ENCODE measurements at regions of chr22 and their contacts with region 1.

Region 1: DNA sequence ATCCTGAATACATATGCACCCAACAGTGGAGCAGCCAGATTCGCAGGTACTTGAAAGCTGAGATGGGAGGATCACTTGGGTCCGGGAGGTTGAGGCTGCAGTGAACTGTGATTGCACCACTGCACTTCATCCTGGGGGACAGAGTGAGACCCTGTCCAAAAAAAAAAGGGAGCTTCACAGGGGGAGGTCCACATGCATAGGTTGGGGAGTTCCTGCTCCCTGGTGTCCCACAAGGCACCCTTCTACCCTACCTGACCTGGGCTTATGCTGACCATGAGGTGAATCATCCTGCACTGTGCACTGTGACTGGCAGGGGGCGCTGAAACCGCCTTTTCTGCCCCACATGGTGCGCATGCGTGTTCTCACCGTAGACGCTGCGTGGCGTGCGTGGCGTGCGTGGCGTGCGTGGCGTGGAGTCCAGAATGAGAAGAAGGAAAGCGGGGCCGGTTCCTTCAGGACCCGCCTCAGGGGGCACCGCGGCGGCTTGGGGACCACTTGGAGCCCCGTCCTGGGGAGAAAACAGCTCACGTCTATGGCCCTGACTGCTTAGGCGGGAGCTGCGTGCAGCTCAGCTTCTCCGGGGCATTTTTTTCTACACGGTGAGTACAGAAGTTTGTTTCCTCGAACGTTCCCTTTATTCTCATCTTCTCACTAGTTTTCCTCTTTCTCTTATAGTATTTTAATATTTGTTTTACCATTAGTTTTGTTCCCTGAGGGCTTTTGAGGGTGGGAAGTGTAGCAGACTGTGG is 116.6 kb upstream of the GRK3 start:
- DNase-seq: peak; percentile 83
- H3K4me3 Mint-ChIP-seq: peak overlapping the region; percentile 95
- H3K27ac Mint-ChIP-seq: peak overlapping the region; percentile 94
- H3K4me1 Mint-ChIP-seq: peaks cover 38% of the 10 kb centered on the region
- H3K27me3 Mint-ChIP-seq: no peaks in the 10 kb centered on the region

Region 2: DNA sequence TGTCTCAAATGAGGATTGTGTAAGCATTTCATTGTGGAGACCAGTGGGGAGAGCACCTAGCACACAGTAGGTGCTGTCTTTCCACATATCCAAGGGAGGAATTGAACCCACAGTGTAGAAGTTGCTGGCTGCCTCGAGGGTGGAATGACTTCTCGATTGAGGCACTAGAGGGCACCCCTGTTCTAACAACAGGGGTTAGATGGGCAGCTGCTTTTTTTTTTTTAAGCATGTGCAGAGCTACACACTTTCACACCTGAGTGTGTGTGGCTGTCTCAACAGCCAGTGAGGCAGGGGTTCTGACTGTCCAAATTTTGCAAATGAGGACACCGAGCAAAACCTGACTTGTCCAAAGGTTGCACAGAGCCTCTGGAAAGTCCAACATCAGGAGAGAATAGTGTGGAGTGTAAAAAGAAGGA is 366.4 kb before region 1 on chr22:
- intact Hi-C with region 1: loop called (anchors 5 kb)
- DNase-seq: peak; percentile 33
- H3K4me3 Mint-ChIP-seq: no peak overlapping the region
- H3K27ac Mint-ChIP-seq: peak overlapping the region; percentile 72
- H3K4me1 Mint-ChIP-seq: peaks cover 83% of the 10 kb centered on the region
- H3K27me3 Mint-ChIP-seq: no peaks in the 10 kb centered on the region

Region 3: GRCh38 chr22:25362215-25362882 is 85.5 kb before region 1 on chr22:
- intact Hi-C with region 1: loop called (anchors 1 kb)
- DNase-seq: peak; percentile 57
- H3K4me3 Mint-ChIP-seq: no peak overlapping the region
- H3K27ac Mint-ChIP-seq: no peak overlapping the region
- H3K4me1 Mint-ChIP-seq: peaks cover 9% of the 10 kb centered on the region
- H3K27me3 Mint-ChIP-seq: no peaks in the 10 kb centered on the region

Region 4: GRCh38 chr22:25475257-25476022 is 27.6 kb after region 1 on chr22:
- intact Hi-C with region 1: no loop called
- DNase-seq: no peak
- H3K4me3 Mint-ChIP-seq: no peak overlapping the region
- H3K27ac Mint-ChIP-seq: no peak overlapping the region
- H3K4me1 Mint-ChIP-seq: peaks cover 7% of the 10 kb centered on the region
- H3K27me3 Mint-ChIP-seq: no peaks in the 10 kb centered on the region

Region 5: DNA sequence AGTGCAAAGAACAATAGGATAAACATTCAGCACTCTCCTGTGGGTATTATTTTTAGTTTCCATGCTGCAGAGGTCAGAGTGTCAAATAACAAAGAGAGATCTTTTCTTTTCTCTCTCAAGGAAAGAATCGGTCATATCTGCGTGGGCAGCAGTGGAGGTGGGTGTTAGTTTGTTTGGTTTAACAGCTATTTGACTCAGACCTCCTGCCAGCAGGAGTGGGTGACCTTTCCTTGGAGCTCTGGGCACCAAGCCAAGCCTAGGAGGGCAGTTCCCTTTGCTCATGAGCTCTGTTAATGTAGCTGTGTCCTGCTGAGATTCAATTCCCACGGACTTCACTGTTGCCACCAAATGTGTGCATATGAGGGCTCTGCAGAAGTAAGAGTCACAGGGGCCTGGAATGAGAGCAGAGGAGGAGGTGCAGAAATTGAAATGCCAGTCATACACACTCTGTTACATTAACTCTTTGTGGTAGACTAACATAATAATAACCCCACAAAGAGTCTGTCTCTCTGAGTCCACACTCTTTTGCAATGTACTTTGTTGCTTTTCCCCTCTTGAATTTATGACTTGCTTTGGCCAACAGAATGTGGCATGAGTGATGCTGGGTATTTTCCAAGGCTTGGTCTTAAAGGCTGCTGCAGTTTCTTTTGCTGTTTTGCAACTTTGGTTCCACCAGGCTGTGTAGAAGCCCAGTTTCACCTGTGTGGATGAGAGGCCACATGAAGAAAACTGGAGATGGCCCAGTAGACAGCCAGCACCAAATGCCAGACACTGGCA is 40.6 kb after region 1 on chr22:
- intact Hi-C with region 1: loop called (anchors 2 kb)
- DNase-seq: no peak
- H3K4me3 Mint-ChIP-seq: peak overlapping the region; percentile 28
- H3K27ac Mint-ChIP-seq: peak overlapping the region; percentile 90
- H3K4me1 Mint-ChIP-seq: peaks cover 62% of the 10 kb centered on the region
- H3K27me3 Mint-ChIP-seq: peaks cover 4% of the 10 kb centered on the region

Region 6: GRCh38 chr22:25777870-25778269 is 330.0 kb after region 1 on chr22:
- intact Hi-C with region 1: loop called (anchors 1 kb)
- DNase-seq: peak; percentile 8
- H3K4me3 Mint-ChIP-seq: no peak overlapping the region
- H3K27ac Mint-ChIP-seq: no peak overlapping the region
- H3K4me1 Mint-ChIP-seq: peaks cover 4% of the 10 kb centered on the region
- H3K27me3 Mint-ChIP-seq: no peaks in the 10 kb centered on the region

Measured in activated T-helper 1 cell treated with anti-CD3 and anti-CD28 coated beads, Interleukin-12 subunit alpha, Interleukin-12 subunit beta, Interleukin-2, Interleukin-4 antibody, amounts not matched to agents 30 ng/mL and 10 ng/mL and 1 ng/mL, durations not matched to agents 14 hours and 24 hours and 36 hours (primary cell).